Activated B cell treated with CpG ODN at 0.5 μM for 24 hours (primary cell): ENCODE measurements at regions of chr16 and their contacts with region 1.

Region 1: GRCh38 chr16:87778830-87779579 is 13.2 kb upstream of the KLHDC4 start:
- DNase-seq: peak; percentile 96
- ATAC-seq: peak; percentile 81
- H3K4me3 Mint-ChIP-seq: peak overlapping the region; percentile 64
- H3K27ac Mint-ChIP-seq: peak overlapping the region; percentile 95
- H3K4me1 Mint-ChIP-seq: peaks cover 44% of the 10 kb centered on the region
- H3K27me3 Mint-ChIP-seq: no peaks in the 10 kb centered on the region
- CTCF ChIP-seq: peak; percentile 74

Region 2: GRCh38 chr16:87316923-87317749 is 461.9 kb before region 1 on chr16 and contains the start of gene C16orf95:
- CTCF ChIA-PET with region 1: no interaction called
- POLR2A ChIA-PET with region 1: no interaction called
- intact Hi-C with region 1: no loop called
- DNase-seq: peak; percentile 95
- ATAC-seq: peak; percentile 91
- H3K4me3 Mint-ChIP-seq: peak within 1 kb of the TSS; percentile 94
- H3K27ac Mint-ChIP-seq: peak within 1 kb of the TSS; percentile 96
- H3K4me1 Mint-ChIP-seq: peaks cover 13% of the 10 kb centered on the region
- H3K27me3 Mint-ChIP-seq: no peaks in the 10 kb centered on the region
- CTCF ChIP-seq: no peak
- total RNA-seq, gene C16orf95: 1.7 and 2.1 TPM in 2 replicates

Region 3: DNA sequence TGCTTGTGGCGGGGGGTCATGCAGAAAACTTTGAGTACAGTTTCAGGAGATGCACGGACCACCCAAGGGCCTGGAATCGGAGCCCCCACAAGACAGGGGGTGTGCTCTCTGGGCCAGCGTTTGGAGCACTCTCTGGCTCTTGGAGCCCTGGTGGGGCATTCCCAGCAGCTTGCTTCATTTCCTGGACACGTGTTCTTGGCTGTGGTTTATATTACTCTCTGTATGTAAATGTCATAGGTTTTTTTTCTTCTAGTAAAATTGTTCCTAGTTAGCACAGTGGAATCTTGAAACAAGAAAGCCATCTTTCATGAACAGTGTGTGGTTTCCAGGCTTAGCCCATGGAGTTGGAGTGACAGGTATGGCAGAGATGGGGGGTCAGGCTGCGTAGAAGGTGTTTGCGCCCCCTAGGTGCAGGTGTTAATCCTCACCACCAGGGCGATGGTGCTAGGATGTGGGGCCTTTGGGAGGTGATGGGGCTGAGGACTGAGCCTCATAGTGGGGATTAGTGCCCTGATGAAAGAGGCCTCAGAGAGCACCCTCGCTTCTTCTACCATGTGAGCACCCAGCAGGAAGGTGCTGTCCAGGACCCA is 96.9 kb before region 1 on chr16:
- CTCF ChIA-PET with region 1: no interaction called
- POLR2A ChIA-PET with region 1: no interaction called
- intact Hi-C with region 1: no loop called
- DNase-seq: no peak
- ATAC-seq: peak; percentile 56
- H3K4me3 Mint-ChIP-seq: no peak overlapping the region
- H3K27ac Mint-ChIP-seq: no peak overlapping the region
- H3K4me1 Mint-ChIP-seq: peaks cover 5% of the 10 kb centered on the region
- H3K27me3 Mint-ChIP-seq: peaks cover 4% of the 10 kb centered on the region
- CTCF ChIP-seq: no peak

Region 4: GRCh38 chr16:87765776-87766484 is 13.1 kb before region 1 on chr16 and contains the start of gene KLHDC4:
- CTCF ChIA-PET with region 1: interaction called, 15 read pairs
- POLR2A ChIA-PET with region 1: interaction called, 30 read pairs
- intact Hi-C with region 1: no loop called
- DNase-seq: peak; percentile 87
- ATAC-seq: peak; percentile 84
- H3K4me3 Mint-ChIP-seq: peak within 1 kb of the TSS; percentile 100
- H3K27ac Mint-ChIP-seq: peak within 1 kb of the TSS; percentile 98
- H3K4me1 Mint-ChIP-seq: peaks cover 31% of the 10 kb centered on the region
- H3K27me3 Mint-ChIP-seq: no peaks in the 10 kb centered on the region
- CTCF ChIP-seq: no peak
- total RNA-seq, gene KLHDC4: 70.1 and 87.0 TPM in 2 replicates

Region 5: DNA sequence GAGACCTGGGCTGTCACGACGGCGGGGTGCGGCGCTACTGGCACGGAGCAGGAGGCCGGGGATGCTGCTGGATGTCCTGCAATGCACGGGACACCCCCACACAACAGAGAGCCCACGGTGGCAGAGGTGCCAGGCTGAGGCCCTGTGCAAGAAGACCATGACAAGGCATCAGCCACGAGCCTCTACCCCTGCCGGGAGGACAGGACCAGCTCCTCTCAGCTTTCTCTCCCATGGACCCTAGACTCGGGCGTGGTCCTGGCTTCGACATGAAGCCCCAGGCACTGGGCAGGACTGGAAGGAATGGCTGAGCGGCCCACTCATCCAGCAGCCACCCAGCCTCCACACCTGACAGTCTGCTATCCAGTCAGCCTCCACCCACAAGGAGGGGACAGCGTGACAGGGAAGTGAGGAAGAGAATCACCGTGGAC is 64.7 kb after region 1 on chr16:
- CTCF ChIA-PET with region 1: interaction called, 49 read pairs
- POLR2A ChIA-PET with region 1: interaction called, 10 read pairs
- intact Hi-C with region 1: no loop called
- DNase-seq: no peak
- ATAC-seq: no peak
- H3K4me3 Mint-ChIP-seq: no peak overlapping the region
- H3K27ac Mint-ChIP-seq: no peak overlapping the region
- H3K4me1 Mint-ChIP-seq: peaks cover 11% of the 10 kb centered on the region
- H3K27me3 Mint-ChIP-seq: no peaks in the 10 kb centered on the region
- CTCF ChIP-seq: no peak

Region 6: DNA sequence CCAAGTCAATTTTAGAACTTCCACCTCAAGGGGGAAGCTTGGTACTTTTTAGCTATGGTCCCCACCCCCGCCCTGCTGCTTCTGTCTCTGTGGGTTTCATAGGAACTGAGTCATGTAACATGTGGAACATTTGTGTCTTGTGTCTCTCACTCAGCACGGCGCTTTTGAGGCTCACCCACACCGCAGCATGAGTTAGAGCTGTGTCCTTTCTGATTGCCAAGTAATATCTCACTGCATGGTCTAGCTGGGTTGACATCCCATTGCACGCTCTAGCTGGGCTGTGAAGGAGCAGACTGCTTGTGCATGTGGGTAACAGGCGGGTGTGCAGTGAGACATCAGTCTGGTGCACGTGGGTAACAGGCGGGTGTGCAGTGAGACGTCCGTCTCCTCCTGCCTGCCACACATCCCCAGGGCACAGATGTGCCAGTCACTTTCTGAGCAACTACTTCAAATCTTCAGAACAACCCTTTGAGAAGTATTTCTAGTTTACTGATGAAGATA is 116.7 kb after region 1 on chr16:
- CTCF ChIA-PET with region 1: interaction called, 10 read pairs
- POLR2A ChIA-PET with region 1: interaction called, 7 read pairs
- intact Hi-C with region 1: no loop called
- DNase-seq: peak; percentile 32
- ATAC-seq: peak; percentile 85
- H3K4me3 Mint-ChIP-seq: no peak overlapping the region
- H3K27ac Mint-ChIP-seq: peak overlapping the region; percentile 87
- H3K4me1 Mint-ChIP-seq: peaks cover 36% of the 10 kb centered on the region
- H3K27me3 Mint-ChIP-seq: peaks cover 10% of the 10 kb centered on the region
- CTCF ChIP-seq: no peak

Region 7: DNA sequence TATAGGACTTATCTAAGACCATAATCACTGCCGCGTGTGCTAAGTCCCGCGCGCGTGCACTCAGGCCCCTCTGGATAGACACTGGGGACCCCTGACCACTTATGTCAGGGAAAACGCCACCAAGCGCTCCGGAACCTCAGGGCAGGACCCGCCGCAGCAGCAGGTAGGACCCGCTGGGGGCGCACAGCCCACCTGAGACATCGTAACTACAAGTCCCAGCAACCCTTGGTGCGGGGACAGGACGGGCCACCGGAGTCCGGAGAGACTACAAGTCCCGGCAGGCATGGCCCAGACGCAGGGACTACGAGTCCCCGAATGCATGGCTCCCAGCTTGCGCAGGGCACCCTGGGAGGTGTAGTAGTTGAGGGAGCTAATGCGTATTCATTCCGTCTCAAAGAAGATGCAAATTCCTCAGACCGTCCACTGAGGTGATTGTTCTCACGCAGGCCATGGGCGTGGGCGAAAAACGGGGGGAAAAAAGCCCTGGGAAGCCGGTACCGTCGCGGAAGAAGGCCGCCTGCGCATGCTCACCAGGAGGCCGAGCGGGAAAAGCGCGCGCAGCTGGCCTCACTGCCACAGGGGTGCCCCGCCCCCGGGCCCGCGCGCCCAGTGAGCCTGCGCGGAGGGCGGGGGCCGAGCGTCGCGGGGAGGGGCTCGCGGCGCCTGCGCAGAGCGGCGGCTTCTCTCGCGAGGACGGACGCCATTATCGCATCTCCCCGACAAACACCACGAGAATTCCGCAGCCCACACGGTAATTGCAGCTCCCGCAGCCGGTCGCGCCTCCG is 172.0 kb after region 1 on chr16 and contains the start of gene BANP:
- CTCF ChIA-PET with region 1: interaction called, 5 read pairs
- POLR2A ChIA-PET with region 1: interaction called, 10 read pairs
- intact Hi-C with region 1: no loop called
- DNase-seq: peak; percentile 95
- ATAC-seq: peak; percentile 93
- H3K4me3 Mint-ChIP-seq: peak within 1 kb of the TSS; percentile 97
- H3K27ac Mint-ChIP-seq: peak within 1 kb of the TSS; percentile 100
- H3K4me1 Mint-ChIP-seq: peaks cover 69% of the 10 kb centered on the region
- H3K27me3 Mint-ChIP-seq: no peaks in the 10 kb centered on the region
- CTCF ChIP-seq: no peak
- total RNA-seq, gene BANP: 62.8 and 72.3 TPM in 2 replicates

Region 8: GRCh38 chr16:88437373-88437964 is 658.5 kb after region 1 on chr16:
- CTCF ChIA-PET with region 1: interaction called, 7 read pairs
- POLR2A ChIA-PET with region 1: interaction called, 4 read pairs
- intact Hi-C with region 1: loop called (anchors 1 kb)
- DNase-seq: peak; percentile 71
- ATAC-seq: peak; percentile 80
- H3K4me3 Mint-ChIP-seq: no peak overlapping the region
- H3K27ac Mint-ChIP-seq: no peak overlapping the region
- H3K4me1 Mint-ChIP-seq: no peaks in the 10 kb centered on the region
- H3K27me3 Mint-ChIP-seq: no peaks in the 10 kb centered on the region
- CTCF ChIP-seq: no peak

Region 9: GRCh38 chr16:88578446-88579313 is 799.7 kb after region 1 on chr16:
- CTCF ChIA-PET with region 1: no interaction called
- POLR2A ChIA-PET with region 1: no interaction called
- intact Hi-C with region 1: no loop called
- DNase-seq: no peak
- ATAC-seq: no peak
- H3K4me3 Mint-ChIP-seq: no peak overlapping the region
- H3K27ac Mint-ChIP-seq: no peak overlapping the region
- H3K4me1 Mint-ChIP-seq: peaks cover 2% of the 10 kb centered on the region
- H3K27me3 Mint-ChIP-seq: no peaks in the 10 kb centered on the region
- CTCF ChIP-seq: no peak